Posterior cingulate gyrus (tissue), 11 donors: ENCODE measurements at regions of chr15 and their contacts with region 1.

Region 1: GRCh38 chr15:49155110-49155833 is at the start of gene COPS2:
- DNase-seq: peak; percentile 92 to 99 (median 95)

Region 2: GRCh38 chr15:48330855-48331795 is 824.1 kb before region 1 on chr15 and contains the start of gene DUT:
- intact Hi-C with region 1: loop called (anchors 10 kb)
- DNase-seq: peak; percentile 75 to 98 (median 88)

Region 3: DNA sequence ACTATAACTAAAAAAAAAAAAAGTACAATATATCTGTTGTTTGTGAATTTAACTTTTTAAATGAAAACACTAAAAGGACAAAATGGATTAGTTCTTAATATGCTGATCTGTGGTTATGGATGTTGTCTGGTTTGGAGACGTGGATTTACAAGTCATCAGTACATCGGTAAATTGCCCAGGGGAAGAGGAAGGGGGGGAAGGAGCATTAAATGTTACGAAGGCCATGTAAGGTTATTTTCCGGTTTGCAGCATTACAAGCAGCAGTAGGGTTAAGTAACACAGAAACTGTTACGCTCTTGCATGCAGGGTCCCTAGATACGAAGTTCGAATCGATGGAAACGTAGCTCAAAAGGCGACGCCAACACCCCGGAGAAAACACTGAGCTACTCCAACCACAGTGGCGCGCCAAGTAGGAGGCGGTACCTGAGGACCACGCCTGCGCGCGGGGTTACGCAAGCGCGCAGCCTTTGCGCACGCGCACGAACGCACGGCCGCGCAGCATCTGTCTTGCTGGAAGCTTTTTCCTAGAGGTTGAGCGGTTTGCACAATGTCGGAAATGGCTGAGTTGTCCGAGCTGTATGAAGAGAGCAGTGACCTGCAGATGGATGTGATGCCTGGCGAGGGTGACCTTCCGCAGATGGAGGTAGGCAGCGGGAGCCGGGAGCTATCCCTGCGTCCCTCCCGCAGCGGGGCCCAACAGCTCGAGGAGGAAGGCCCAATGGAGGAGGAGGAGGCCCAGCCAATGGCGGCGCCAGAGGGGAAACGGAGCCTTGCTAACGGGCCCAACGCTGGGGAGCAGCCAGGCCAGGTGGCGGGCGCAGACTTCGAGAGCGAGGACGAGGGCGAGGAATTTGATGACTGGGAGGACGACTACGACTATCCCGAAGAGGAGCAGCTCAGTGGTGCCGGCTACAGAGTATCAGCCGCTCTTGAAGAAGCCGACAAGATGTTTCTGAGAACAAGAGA is 277.4 kb before region 1 on chr15 and contains the start of gene EID1:
- intact Hi-C with region 1: loop called (anchors 2 kb)
- DNase-seq: peak; percentile 87 to 98 (median 90)

Region 4: DNA sequence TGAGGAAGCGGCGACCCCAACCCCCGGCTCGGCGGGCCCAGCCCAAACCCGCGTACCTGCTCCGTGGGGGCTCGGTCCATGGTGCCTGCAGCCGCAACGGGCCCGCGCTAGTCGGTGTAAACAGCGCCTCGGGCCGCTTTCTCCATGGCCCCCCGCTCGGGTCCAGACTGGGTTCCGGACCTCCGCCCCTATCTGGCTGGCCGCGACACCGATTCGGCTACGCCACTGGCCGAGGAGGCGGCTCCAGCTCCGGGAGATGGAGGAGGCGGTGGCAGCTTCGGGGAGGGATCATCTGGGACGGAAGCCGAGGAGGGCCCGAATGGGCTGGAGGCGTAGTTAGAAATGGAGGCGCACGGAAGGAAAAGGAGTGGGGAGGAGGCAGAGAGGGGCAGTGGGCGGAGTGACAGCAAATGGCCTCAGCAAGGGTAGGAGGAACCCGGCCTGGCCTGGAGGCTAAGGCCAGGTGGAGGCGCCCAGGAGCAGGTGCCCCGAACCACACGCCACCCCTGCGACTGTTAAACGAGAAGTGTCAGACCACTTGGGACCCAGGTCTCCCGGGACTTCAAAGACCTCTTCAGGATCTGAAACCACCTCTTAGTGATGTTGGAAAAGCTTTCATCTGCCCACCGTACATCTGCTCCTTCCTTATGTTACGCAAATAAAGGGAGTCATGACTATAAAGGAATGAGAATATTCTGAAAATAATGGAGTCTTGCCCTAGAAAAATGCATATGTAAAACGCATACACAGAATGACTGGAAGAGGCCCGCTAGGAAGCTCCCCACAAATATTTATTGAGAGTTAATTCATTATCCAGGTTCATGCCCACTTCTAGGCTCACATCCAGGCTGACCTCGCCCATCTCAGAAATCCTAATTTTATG is 108.8 kb before region 1 on chr15 and contains the start of gene SECISBP2L:
- intact Hi-C with region 1: loop called (anchors 1 kb)
- DNase-seq: peak; percentile 91 to 99 (median 93)

Region 5: DNA sequence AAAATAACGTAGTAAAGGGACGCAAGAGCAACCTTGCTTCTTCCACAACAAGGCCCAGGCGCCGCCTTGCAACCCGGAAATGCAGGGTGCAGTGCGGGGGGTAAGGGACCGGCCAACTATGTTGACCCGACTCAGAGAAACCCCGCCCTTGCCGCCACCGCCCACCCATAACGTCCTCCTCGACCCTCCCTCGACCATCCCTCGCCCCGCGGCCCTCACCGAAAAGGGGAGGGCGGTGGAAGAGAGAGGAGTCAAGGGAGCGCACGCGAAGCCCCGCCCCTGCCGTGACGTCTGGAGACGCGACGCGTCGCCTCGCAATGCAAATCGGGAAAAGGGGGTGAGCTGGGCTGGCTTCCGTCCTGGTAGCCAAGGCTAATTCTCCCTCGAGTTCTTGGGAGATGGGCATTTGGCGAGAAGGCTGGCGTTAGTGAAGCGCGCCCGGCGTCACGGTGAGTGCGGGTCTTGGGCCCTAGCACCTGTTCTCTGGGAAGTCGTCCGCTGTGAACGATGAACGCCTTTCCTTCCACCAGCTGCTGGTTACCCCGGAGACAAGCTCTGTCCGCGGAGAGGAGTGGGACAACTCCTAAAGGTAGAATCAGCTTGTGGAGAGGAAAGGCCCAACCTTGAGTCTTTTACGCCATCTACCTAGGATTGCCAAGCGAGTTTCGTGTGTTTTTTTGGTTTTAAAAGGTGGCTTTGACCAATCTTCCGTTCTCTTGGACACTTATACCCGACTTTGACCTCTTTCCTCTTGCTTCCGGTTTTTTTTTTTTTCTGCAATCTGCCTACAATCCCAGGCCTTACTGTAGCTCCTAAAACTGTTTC is 1269.0 kb after region 1 on chr15 and contains the start of gene USP8:
- intact Hi-C with region 1: loop called (anchors 10 kb)
- DNase-seq: peak; percentile 89 to 99 (median 94)